ENCODE measurements at regions of chr1 and their contacts with region 1.

Region 1: DNA sequence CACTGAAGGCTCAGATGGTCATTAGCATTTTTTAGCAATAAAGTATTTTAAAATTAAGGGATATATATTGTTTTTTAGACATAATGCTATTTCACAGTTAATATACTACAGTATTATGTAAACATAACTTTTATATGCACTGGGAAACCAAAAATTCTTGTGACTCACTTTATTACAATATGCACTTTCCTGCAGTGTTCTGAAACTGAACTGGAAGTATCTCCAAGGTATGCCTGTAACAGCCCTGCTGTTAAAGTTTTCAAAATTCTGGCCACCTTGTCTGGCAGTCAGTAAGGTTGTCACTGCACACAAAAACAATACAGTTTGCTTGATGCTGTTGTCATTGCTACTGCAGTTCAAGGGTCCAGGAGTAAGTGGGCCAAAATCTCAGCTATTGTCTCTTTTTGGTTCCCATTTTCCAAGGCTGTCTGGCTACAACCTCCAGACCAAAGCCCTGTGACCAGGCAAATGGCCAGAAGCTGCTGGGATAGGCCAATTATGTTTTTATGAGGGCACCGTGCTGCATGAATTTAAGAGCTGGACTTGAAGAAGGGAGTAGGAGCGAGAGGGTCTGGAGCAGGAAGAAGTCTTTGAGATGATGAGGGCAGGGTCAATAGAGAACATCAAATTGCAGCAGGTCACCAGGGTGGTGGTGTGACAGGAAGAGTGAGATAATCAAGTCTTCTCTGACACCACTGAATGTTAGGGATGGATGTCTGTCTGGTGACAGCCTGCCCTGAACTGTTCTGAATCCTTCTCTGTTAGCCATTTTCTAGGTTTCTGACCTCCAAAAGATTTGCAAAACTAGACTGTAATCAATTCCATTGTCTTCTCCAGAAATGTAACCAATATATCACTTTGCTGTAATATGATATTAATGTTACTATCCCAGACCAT is 82.3 kb upstream of the CACHD1 start:
- DNase-seq: no peak
- ATAC-seq: peak; percentile 51; the same call in 1 of the 2 replicates
- H3K4me3 ChIP-seq: no peak overlapping the region
- H3K27ac ChIP-seq: no peak overlapping the region
- H3K4me1 ChIP-seq: peaks cover 3% of the 10 kb centered on the region; the same call in 1 of the 2 replicates
- H3K27me3 ChIP-seq: no peaks in the 10 kb centered on the region
- CTCF ChIP-seq: no peak

Region 2: GRCh38 chr1:64231153-64231552 is 156.5 kb before region 1 on chr1:
- CTCF ChIA-PET with region 1: no interaction called
- POLR2A ChIA-PET with region 1: no interaction called
- in situ Hi-C with region 1: no loop called
- intact Hi-C with region 1: no loop called
- DNase-seq: no peak
- ATAC-seq: peak; percentile 56; the same call in 1 of the 2 replicates
- H3K4me3 ChIP-seq: no peak overlapping the region
- H3K27ac ChIP-seq: no peak overlapping the region
- H3K4me1 ChIP-seq: no peaks in the 10 kb centered on the region; the same call in 1 of the 2 replicates
- H3K27me3 ChIP-seq: no peaks in the 10 kb centered on the region
- CTCF ChIP-seq: no peak

Region 3: GRCh38 chr1:64348270-64348960 is 39.2 kb before region 1 on chr1:
- CTCF ChIA-PET with region 1: no interaction called
- POLR2A ChIA-PET with region 1: interaction called, 10 read pairs
- in situ Hi-C with region 1: no loop called
- intact Hi-C with region 1: no loop called
- DNase-seq: no peak
- ATAC-seq: no peak
- H3K4me3 ChIP-seq: no peak overlapping the region
- H3K27ac ChIP-seq: peak overlapping the region; percentile 56
- H3K4me1 ChIP-seq: peaks cover 27% of the 10 kb centered on the region
- H3K27me3 ChIP-seq: no peaks in the 10 kb centered on the region
- CTCF ChIP-seq: no peak

Region 4: DNA sequence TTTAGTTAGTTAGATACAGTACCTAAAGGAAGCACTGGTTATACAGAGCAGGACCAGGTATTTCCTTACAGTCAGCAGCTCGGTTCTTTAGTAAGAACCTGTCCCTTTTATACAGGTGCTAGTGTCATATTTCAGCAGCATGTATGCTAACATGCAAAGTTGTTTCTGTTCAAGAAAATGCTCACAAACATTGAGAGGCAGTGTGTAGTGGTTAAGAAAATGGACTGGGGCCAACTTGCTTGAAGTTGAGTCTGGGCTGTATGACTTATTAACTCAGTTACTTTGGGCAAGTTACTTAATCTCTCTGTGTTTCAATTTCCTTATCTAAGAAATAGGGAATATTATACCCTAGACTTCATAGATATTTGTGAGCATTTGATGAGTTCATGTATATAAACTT is 791.5 kb after region 1 on chr1:
- CTCF ChIA-PET with region 1: interaction called, 11 read pairs
- POLR2A ChIA-PET with region 1: no interaction called
- in situ Hi-C with region 1: no loop called
- intact Hi-C with region 1: no loop called
- DNase-seq: no peak
- ATAC-seq: no peak
- H3K4me3 ChIP-seq: no peak overlapping the region
- H3K27ac ChIP-seq: no peak overlapping the region
- H3K4me1 ChIP-seq: peaks cover 24% of the 10 kb centered on the region
- H3K27me3 ChIP-seq: no peaks in the 10 kb centered on the region
- CTCF ChIP-seq: no peak

Region 5: DNA sequence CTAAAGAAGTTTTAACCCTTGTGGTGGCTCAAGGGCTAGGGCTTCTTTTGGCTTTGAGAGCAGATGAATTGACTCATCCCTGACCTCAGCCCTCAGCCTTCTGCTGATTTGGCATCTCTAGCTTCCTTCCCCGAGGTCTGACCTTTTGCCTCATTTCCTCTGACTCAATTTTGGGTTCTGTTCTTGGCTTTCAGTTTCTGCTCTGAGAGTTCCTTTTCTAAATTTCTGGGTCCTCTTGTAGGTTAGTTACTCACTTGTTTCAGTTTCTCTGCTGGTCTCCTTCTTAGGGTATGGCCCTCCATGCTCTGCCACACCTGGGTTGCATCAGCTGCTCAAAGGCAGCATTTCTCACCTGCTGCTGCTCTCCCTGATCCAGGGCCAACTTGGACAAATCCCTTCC is 1424.4 kb after region 1 on chr1:
- CTCF ChIA-PET with region 1: no interaction called
- POLR2A ChIA-PET with region 1: no interaction called
- in situ Hi-C with region 1: no loop called
- intact Hi-C with region 1: no loop called
- DNase-seq: peak; percentile 12
- ATAC-seq: no peak
- H3K4me3 ChIP-seq: no peak overlapping the region
- H3K27ac ChIP-seq: no peak overlapping the region
- H3K4me1 ChIP-seq: no peaks in the 10 kb centered on the region
- H3K27me3 ChIP-seq: no peaks in the 10 kb centered on the region
- CTCF ChIP-seq: no peak